ENCODE measurements at regions of chr2 and their contacts with region 1.

Region 1: GRCh38 chr2:161273038-161273760 is 35.0 kb upstream of the PSMD14 start:
- DNase-seq: peak; percentile 40
- H3K4me3 ChIP-seq: no peak overlapping the region
- H3K27ac ChIP-seq: no peak overlapping the region
- H3K4me1 ChIP-seq: no peaks in the 10 kb centered on the region
- H3K27me3 ChIP-seq: no peaks in the 10 kb centered on the region
- CTCF ChIP-seq: peak; percentile 59 to 65

Region 2: DNA sequence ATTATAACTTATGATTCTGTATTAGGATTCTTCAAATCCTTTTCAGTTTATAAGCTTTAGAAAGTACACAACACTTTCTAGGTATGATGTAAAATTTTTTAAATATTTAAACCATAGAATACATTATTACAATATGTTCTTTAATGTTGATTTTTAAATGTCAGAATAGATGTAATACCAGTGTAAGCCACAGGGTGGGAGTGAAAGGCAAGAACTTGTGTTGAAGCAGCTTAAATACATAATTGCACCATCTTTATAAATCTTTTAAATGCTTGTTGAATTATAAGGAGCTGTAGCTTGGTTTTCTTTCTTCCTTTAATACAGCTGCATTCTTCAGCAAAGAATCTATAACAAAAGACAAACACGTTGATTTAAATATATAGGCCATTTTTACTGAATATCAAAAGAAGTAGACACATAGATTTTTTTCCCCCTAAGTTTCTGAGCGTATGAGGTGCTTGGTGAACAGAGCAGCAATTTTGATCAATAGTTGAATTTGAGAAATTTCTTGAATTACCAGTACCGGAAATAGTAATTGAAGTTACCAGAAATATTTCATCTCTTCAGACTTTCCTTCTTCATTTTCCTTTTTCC is 50.0 kb before region 1 on chr2:
- CTCF ChIA-PET with region 1: no interaction called
- dilution Hi-C with region 1: no loop called
- in situ Hi-C with region 1: no loop called
- intact Hi-C with region 1: loop called (anchors 1 kb)
- DNase-seq: peak; percentile 24
- H3K4me3 ChIP-seq: no peak overlapping the region
- H3K27ac ChIP-seq: no peak overlapping the region
- H3K4me1 ChIP-seq: no peaks in the 10 kb centered on the region
- H3K27me3 ChIP-seq: no peaks in the 10 kb centered on the region
- CTCF ChIP-seq: peak; percentile 61 to 62

Region 3: GRCh38 chr2:161250864-161251436 is 22.2 kb before region 1 on chr2:
- CTCF ChIA-PET with region 1: interaction called, 3 read pairs
- dilution Hi-C with region 1: no loop called
- in situ Hi-C with region 1: no loop called
- intact Hi-C with region 1: loop called (anchors 1 kb)
- DNase-seq: peak; percentile 71
- H3K4me3 ChIP-seq: no peak overlapping the region
- H3K27ac ChIP-seq: no peak overlapping the region
- H3K4me1 ChIP-seq: no peaks in the 10 kb centered on the region
- H3K27me3 ChIP-seq: no peaks in the 10 kb centered on the region
- CTCF ChIP-seq: peak; percentile 75 to 77

Region 4: DNA sequence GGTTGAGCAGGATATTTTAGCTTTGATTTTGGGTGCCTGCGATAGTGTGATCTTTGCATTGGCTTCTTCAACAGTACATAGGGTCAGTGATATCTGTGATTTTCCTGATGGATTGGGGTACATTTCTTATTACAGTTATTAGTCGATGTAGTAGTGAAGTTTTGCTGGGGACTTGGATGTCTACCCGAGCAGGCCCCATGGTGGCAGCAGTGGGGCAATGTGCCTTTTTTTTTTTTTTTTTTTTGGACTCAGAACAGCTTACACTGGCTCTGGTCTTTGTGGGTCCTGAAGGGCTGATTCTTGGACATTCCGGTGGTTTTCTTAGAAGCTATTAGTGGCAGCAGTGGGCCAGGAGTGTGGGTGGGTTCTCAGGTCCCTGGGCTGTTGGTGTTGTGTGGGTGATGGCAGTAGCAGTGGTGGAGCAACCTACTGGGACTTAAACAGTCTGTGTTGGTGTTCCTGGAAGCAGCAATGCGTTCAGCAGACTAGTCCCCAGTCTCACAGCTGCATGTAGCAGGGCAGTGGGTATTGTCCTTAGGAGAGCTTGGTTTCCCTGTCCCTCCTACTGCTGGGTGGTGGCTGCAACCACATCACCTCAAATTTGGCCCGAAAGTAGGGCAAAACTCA is 297.3 kb after region 1 on chr2:
- CTCF ChIA-PET with region 1: no interaction called
- dilution Hi-C with region 1: no loop called
- in situ Hi-C with region 1: loop called in 1 of 2 experiments (anchors 25 kb)
- intact Hi-C with region 1: no loop called
- DNase-seq: no peak
- H3K4me3 ChIP-seq: no peak overlapping the region
- H3K27ac ChIP-seq: no peak overlapping the region
- H3K4me1 ChIP-seq: no peaks in the 10 kb centered on the region
- H3K27me3 ChIP-seq: no peaks in the 10 kb centered on the region
- CTCF ChIP-seq: peak; percentile 12 to 51

Region 5: GRCh38 chr2:161946489-161947107 is 673.4 kb after region 1 on chr2:
- CTCF ChIA-PET with region 1: no interaction called
- dilution Hi-C with region 1: no loop called
- in situ Hi-C with region 1: loop called in 1 of 2 experiments (anchors 25 kb)
- intact Hi-C with region 1: no loop called
- DNase-seq: peak; percentile 7
- H3K4me3 ChIP-seq: no peak overlapping the region
- H3K27ac ChIP-seq: no peak overlapping the region
- H3K4me1 ChIP-seq: no peaks in the 10 kb centered on the region
- H3K27me3 ChIP-seq: peaks cover 4% of the 10 kb centered on the region
- CTCF ChIP-seq: peak; percentile 50 to 54